ENCODE measurements at regions of chr12 and their contacts with region 1.

Region 1: GRCh38 chr12:96143827-96144565 is 50.2 kb upstream of the ELK3 start:
- DNase-seq: no peak
- H3K4me3 Mint-ChIP-seq: no peak overlapping the region
- H3K27ac Mint-ChIP-seq: no peak overlapping the region
- H3K4me1 Mint-ChIP-seq: peaks cover 25% of the 10 kb centered on the region
- H3K27me3 Mint-ChIP-seq: no peaks in the 10 kb centered on the region

Region 2: DNA sequence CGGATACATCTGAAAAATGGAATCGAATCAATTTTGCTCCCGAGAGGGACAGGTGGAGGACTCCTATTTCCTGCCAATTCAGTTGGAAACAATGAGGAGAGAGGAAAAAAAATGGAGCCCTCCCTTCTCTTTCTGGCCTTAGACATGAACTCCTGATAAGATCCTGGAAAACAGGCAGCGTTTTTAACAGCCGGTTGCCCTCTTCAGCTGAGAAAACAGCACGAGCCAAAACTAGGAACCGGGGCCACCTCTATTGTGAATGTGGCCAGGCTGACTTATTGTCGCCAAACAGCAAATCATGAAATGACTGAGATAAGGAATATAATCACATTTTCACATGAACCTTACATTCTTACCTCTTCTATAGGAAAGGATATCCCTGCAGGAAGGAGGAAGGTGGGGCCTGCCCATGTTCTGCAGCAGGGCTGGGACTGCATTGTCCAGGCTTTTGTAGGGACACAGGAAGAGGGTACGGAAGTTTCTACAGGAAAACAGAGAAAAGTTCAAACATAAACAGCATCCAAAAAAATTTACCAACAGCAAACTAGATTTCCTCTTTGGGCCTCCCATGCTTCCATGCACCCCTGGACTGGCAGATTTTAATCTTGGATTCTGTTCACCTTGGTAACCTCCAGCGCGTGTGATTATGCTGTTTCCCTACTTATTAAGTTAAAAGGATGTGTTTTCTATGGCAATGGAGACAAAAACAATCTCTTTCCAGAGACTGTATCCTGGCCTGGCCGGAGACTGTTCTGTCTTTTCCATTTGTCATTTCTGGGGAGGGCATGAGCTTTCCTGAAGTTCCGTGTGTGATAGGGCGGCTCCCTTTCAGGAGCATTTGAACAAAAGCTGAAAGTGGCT is 21.2 kb after region 1 on chr12:
- CTCF ChIA-PET with region 1: no interaction called
- intact Hi-C with region 1: loop called (anchors 2 kb)
- DNase-seq: no peak
- H3K4me3 Mint-ChIP-seq: no peak overlapping the region
- H3K27ac Mint-ChIP-seq: no peak overlapping the region
- H3K4me1 Mint-ChIP-seq: no peaks in the 10 kb centered on the region
- H3K27me3 Mint-ChIP-seq: no peaks in the 10 kb centered on the region

Region 3: DNA sequence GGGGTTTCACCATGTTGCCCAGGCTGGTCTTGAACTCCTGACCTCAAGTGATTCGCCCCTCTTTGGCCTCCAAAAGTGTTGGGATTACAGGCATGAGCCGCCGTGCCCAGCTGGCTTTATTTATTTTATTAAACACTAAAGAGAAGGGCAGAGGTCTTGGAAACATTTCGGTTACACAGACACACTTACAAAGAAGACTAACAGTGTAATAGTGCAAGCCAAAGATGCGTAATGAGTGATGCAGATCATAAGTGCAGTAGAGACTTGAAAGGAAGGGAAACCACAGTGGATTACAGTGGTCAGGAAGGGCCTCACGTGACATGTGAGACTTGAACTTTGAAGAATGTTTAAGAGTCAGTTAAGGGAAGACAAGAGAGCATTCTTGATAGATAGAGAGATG is 290.1 kb after region 1 on chr12:
- CTCF ChIA-PET with region 1: no interaction called
- intact Hi-C with region 1: no loop called
- DNase-seq: peak; percentile 91
- H3K4me3 Mint-ChIP-seq: no peak overlapping the region
- H3K27ac Mint-ChIP-seq: peak overlapping the region; percentile 48
- H3K4me1 Mint-ChIP-seq: peaks cover 17% of the 10 kb centered on the region
- H3K27me3 Mint-ChIP-seq: no peaks in the 10 kb centered on the region